CD14-positive monocyte (primary cell): ENCODE measurements at regions of chr15 and their contacts with region 1.

Region 1: GRCh38 chr15:90931737-90932659 is at the start of gene HDDC3:
- DNase-seq: peak; percentile 81 to 84 (median 82)
- H3K4me3 ChIP-seq: peak within 1 kb of the TSS; percentile 51 to 81 (median 63)
- H3K4me3 Mint-ChIP-seq: peak within 1 kb of the TSS; percentile 88 to 97
- H3K27ac ChIP-seq: peak within 1 kb of the TSS; percentile 81 to 96
- H3K27ac Mint-ChIP-seq: peak within 1 kb of the TSS; percentile 92 to 97 (median 97)
- H3K4me1 ChIP-seq: peaks cover 63 to 87% of the 10 kb centered on the region in 2 donors
- H3K4me1 Mint-ChIP-seq: peaks cover 53% of the 10 kb centered on the region
- H3K27me3 ChIP-seq: no peaks in the 10 kb centered on the region
- H3K27me3 Mint-ChIP-seq: peaks cover 0 to 2% (median 0%) of the 10 kb centered on the region in 3 donors
- CTCF ChIP-seq: peak; percentile 89
- polyA plus RNA-seq, gene HDDC3: 11.6 to 19.7 (median 14.8) TPM

Region 2: GRCh38 chr15:90895336-90896117 is 36.5 kb before region 1 on chr15:
- intact Hi-C with region 1: loop called in 1 of 2 experiments (anchors 5 kb)
- DNase-seq: no peak
- H3K4me3 ChIP-seq: no peak overlapping the region
- H3K4me3 Mint-ChIP-seq: no peak overlapping the region
- H3K27ac ChIP-seq: peak overlapping the region; percentile 68 to 80
- H3K27ac Mint-ChIP-seq: peak overlapping the region; percentile 36 to 89 (median 61)
- H3K4me1 ChIP-seq: peaks cover 35 to 42% of the 10 kb centered on the region in 2 donors
- H3K4me1 Mint-ChIP-seq: peaks cover 31% of the 10 kb centered on the region
- H3K27me3 ChIP-seq: no peaks in the 10 kb centered on the region
- H3K27me3 Mint-ChIP-seq: peaks cover 0 to 3% (median 2%) of the 10 kb centered on the region in 3 donors
- CTCF ChIP-seq: peak; percentile 8

Region 3: DNA sequence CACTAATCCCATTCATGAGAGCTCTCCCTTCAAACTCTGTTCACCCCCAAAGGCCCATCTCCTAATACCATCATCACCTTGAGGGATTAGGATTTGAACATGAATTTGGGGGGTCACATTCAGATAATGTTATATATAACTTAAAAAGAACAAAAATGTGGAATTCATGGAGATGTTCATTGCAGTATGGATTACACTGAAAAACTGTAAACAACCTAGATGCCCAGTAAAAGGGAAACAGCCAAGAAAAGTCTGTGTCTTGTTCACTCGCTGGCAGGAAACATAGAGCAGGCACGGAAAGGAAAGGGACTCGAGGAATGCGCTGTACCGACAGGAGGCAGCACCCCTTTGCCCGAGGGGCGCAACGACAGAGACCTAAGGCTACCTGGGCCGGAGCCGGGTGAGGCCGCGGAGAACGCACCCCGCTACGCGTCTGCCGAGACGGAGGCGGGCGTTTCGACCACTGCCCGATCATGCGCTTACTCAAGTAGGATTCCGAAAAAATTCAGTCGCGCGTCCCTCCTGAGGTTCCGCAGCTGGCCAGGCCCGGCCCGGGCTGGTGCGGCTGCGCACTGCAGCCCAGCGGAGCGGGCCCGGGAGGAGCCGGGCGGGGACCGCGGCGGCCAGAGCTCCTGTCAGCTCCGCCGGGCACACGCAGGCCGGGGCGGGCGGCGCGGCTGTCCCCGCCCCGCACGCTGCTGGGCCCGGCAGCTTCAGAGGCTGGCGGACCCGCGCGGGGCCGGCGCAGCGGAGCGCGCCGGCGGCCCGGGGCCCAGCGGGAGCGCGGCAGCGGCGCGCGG is 29.8 kb before region 1 on chr15:
- intact Hi-C with region 1: loop called (anchors 2 to 5 kb)
- DNase-seq: peak; percentile 64 to 74 (median 73)
- H3K4me3 ChIP-seq: peak overlapping the region; percentile 54 to 81 (median 66)
- H3K4me3 Mint-ChIP-seq: peak overlapping the region; percentile 81 to 86
- H3K27ac ChIP-seq: peak overlapping the region; percentile 77 to 80
- H3K27ac Mint-ChIP-seq: peak overlapping the region; percentile 78 to 90 (median 88)
- H3K4me1 ChIP-seq: peaks cover 22 to 31% of the 10 kb centered on the region in 2 donors
- H3K4me1 Mint-ChIP-seq: peaks cover 30% of the 10 kb centered on the region
- H3K27me3 ChIP-seq: no peaks in the 10 kb centered on the region
- H3K27me3 Mint-ChIP-seq: peaks cover 0 to 9% (median 7%) of the 10 kb centered on the region in 3 donors
- CTCF ChIP-seq: peak; percentile 83

Region 4: GRCh38 chr15:90915808-90916440 is 16.1 kb before region 1 on chr15:
- intact Hi-C with region 1: loop called (anchors 1 to 2 kb)
- DNase-seq: peak; percentile 95 to 98 (median 98)
- H3K4me3 ChIP-seq: peak overlapping the region; percentile 3 to 76 (median 40)
- H3K4me3 Mint-ChIP-seq: peak overlapping the region; percentile 81 to 93
- H3K27ac ChIP-seq: peak overlapping the region; percentile 83 to 93
- H3K27ac Mint-ChIP-seq: peak overlapping the region; percentile 95 to 98 (median 97)
- H3K4me1 ChIP-seq: peaks cover 49 to 55% of the 10 kb centered on the region in 2 donors
- H3K4me1 Mint-ChIP-seq: peaks cover 55% of the 10 kb centered on the region
- H3K27me3 ChIP-seq: no peaks in the 10 kb centered on the region
- H3K27me3 Mint-ChIP-seq: peaks cover 0 to 2% (median 1%) of the 10 kb centered on the region in 3 donors
- CTCF ChIP-seq: no peak

Region 5: GRCh38 chr15:91407237-91407889 is 475.4 kb after region 1 on chr15:
- intact Hi-C with region 1: no loop called
- DNase-seq: no peak
- H3K4me3 ChIP-seq: no peak overlapping the region
- H3K4me3 Mint-ChIP-seq: no peak overlapping the region
- H3K27ac ChIP-seq: no peak overlapping the region
- H3K27ac Mint-ChIP-seq: no peak overlapping the region
- H3K4me1 ChIP-seq: peaks cover 3% of the 10 kb centered on the region in 2 donors
- H3K4me1 Mint-ChIP-seq: peaks cover 5% of the 10 kb centered on the region
- H3K27me3 ChIP-seq: no peaks in the 10 kb centered on the region
- H3K27me3 Mint-ChIP-seq: no peaks in the 10 kb centered on the region
- CTCF ChIP-seq: no peak